GM10248 (cell line): ENCODE measurements at regions of chr5 and their contacts with region 1.

Region 1: DNA sequence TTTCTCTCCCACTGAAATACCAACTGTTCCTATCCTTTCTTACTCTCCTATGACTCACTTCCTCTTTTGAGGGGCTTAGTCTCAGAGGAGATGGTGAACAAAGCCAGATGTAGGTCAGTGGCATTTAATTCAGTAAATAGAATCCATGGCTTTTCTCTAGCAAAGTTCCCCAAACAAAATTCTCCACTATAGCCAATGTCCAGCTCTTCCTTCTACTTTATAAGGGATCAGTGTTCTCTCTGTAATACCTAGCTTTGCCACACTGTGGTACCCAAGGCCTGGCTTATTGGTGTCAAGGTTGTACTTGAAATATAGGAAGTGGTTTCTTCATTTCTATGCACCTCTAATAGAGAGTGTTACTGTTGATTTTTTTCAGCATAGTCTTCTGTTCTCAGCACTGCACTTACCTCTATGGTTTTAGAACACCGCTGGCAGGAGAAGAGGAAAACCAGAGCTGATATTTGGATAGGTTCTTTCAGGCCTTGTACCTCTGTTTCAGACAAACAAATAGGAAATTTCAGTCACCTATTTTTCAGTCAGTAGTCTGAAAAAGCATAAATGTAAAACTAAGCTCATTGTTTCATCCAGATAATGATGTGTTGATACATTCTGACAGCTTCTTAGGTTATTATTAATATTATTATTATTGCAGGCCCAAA is 40.6 kb upstream of the ITGA2 start:
- DNase-seq: peak; percentile 59
- CTCF ChIP-seq: peak; percentile 72

Region 2: GRCh38 chr5:52844885-52845284 is 103.7 kb before region 1 on chr5:
- CTCF ChIA-PET with region 1: no interaction called
- POLR2A ChIA-PET with region 1: no interaction called
- DNase-seq: no peak
- CTCF ChIP-seq: no peak

Region 3: GRCh38 chr5:52938226-52938625 is 10.3 kb before region 1 on chr5:
- CTCF ChIA-PET with region 1: interaction called, 12 read pairs
- POLR2A ChIA-PET with region 1: no interaction called
- DNase-seq: no peak
- CTCF ChIP-seq: no peak

Region 4: DNA sequence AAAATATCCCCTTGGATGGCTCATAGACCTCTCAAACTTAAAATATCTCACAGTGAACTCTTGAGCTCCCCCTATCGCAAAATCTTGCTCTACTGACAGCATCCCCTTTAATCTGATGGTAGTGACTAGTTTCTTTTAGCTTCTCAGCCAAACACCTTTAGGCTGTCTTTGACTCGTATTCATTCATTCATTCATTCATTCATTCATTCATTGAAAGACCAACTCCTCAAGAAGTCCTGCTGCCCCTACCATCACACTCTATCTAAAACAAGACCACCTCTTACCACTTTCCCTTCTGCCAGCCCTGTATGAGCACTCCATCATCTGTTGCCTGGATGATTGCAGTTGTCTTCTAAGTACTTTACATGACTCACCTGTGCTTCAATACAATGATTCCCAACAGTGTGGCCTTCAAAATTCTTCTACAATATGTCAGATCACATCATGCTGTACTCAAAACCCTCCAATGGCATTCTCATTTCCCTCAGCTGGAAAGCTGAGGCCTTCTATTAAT is 87.4 kb after region 1 on chr5:
- CTCF ChIA-PET with region 1: interaction called, 12 read pairs
- POLR2A ChIA-PET with region 1: no interaction called
- DNase-seq: peak; percentile 26
- CTCF ChIP-seq: peak; percentile 34

Region 5: GRCh38 chr5:53095931-53096525 is 147.5 kb after region 1 on chr5:
- CTCF ChIA-PET with region 1: interaction called, 112 read pairs
- POLR2A ChIA-PET with region 1: no interaction called
- DNase-seq: peak; percentile 41
- CTCF ChIP-seq: peak; percentile 74

Region 6: DNA sequence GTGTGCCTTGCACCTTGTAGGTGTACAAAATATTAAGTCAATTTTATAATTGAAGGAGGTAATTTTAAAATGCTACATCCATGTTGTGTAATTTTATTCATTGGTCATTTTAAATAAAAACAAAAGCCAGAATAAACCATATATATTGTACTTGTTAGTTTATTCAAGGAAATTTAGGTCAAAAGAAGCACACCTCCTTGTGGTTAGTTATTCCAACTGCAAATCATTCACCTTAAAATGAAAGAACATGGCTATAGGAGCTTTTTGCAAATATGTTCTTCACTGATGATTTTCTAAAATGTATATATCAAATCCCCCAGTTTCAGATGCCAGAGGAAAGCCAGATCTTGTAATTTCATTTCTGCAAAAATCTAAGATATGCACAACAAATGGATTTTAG is 166.4 kb after region 1 on chr5:
- CTCF ChIA-PET with region 1: interaction called, 11 read pairs
- POLR2A ChIA-PET with region 1: no interaction called
- DNase-seq: no peak
- CTCF ChIP-seq: no peak